GM12878 (cell line): ENCODE measurements at regions of chr2 and their contacts with region 1.

Region 1: GRCh38 chr2:23404426-23404825 is 19.4 kb downstream of the KLHL29 start:
- DNase-seq: peak; percentile 26
- ATAC-seq: peak; percentile 43
- H3K4me3 ChIP-seq: peak overlapping the region; percentile 43
- H3K27ac ChIP-seq: peak overlapping the region; percentile 60
- H3K4me1 ChIP-seq: peaks cover 20% of the 10 kb centered on the region
- H3K27me3 ChIP-seq: no peaks in the 10 kb centered on the region
- CTCF ChIP-seq: peak; percentile 14 to 42 (median 40); a peak in 4 of 6 replicates
- EP300 ChIP-seq: no peak
- POLR2A ChIP-seq: no peak
- RAD21 ChIP-seq: peak; percentile 67

Region 2: GRCh38 chr2:23199115-23199918 is 205.1 kb before region 1 on chr2:
- CTCF ChIA-PET with region 1: interaction called, 6 read pairs
- POLR2A ChIA-PET with region 1: no interaction called
- RAD21 ChIA-PET with region 1: no interaction called
- SMC1A ChIA-PET with region 1: no interaction called
- in situ Hi-C with region 1: no loop called
- intact Hi-C with region 1: loop called (anchors 5 kb)
- DNase-seq: no peak
- ATAC-seq: peak; percentile 72
- H3K4me3 ChIP-seq: no peak overlapping the region
- H3K27ac ChIP-seq: no peak overlapping the region
- H3K4me1 ChIP-seq: no peaks in the 10 kb centered on the region
- H3K27me3 ChIP-seq: no peaks in the 10 kb centered on the region
- CTCF ChIP-seq: peak; percentile 53 to 73 (median 72)
- EP300 ChIP-seq: no peak
- POLR2A ChIP-seq: no peak
- RAD21 ChIP-seq: peak; percentile 27; the same call in 1 of the 2 replicates

Region 3: GRCh38 chr2:23312996-23313606 is 91.3 kb before region 1 on chr2:
- CTCF ChIA-PET with region 1: interaction called, 4 read pairs
- POLR2A ChIA-PET with region 1: no interaction called
- RAD21 ChIA-PET with region 1: interaction called, 4 read pairs
- SMC1A ChIA-PET with region 1: interaction called, 3 read pairs
- in situ Hi-C with region 1: no loop called
- intact Hi-C with region 1: loop called (anchors 1 kb)
- DNase-seq: peak; percentile 5
- ATAC-seq: peak; percentile 99
- H3K4me3 ChIP-seq: no peak overlapping the region
- H3K27ac ChIP-seq: no peak overlapping the region
- H3K4me1 ChIP-seq: no peaks in the 10 kb centered on the region
- H3K27me3 ChIP-seq: peaks cover 0 to 1% of the 10 kb centered on the region in 2 experiments; a peak in 2 of 4 replicates
- CTCF ChIP-seq: peak; percentile 73 to 98 (median 97)
- EP300 ChIP-seq: no peak
- POLR2A ChIP-seq: no peak
- RAD21 ChIP-seq: peak; percentile 73

Region 4: DNA sequence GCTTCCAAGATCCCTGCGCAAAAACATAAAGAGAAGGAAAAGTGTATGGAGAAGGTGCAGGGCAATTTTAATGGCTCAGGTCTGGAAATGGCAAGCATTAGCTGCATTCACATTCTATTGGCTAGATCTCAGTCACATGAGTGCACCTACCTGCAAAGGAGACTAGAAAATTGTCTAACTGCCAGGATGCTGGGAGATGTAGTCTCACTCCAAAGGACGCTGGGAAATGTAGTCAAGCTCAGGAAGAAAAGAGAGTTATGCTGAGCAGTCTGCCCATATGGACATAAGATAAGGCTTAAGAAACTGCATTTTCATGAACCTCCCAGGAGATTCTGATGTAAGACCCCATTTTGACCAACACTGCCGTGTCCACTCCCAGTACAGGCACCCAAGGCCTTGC is 29.0 kb before region 1 on chr2:
- CTCF ChIA-PET with region 1: interaction called, 6 read pairs
- POLR2A ChIA-PET with region 1: interaction called, 6 read pairs
- RAD21 ChIA-PET with region 1: interaction called, 12 read pairs
- SMC1A ChIA-PET with region 1: interaction called, 14 read pairs
- in situ Hi-C with region 1: no loop called
- intact Hi-C with region 1: no loop called
- DNase-seq: no peak
- ATAC-seq: peak; percentile 77
- H3K4me3 ChIP-seq: no peak overlapping the region
- H3K27ac ChIP-seq: no peak overlapping the region
- H3K4me1 ChIP-seq: peaks cover 30% of the 10 kb centered on the region
- H3K27me3 ChIP-seq: no peaks in the 10 kb centered on the region
- CTCF ChIP-seq: no peak
- EP300 ChIP-seq: no peak
- POLR2A ChIP-seq: no peak
- RAD21 ChIP-seq: no peak

Region 5: DNA sequence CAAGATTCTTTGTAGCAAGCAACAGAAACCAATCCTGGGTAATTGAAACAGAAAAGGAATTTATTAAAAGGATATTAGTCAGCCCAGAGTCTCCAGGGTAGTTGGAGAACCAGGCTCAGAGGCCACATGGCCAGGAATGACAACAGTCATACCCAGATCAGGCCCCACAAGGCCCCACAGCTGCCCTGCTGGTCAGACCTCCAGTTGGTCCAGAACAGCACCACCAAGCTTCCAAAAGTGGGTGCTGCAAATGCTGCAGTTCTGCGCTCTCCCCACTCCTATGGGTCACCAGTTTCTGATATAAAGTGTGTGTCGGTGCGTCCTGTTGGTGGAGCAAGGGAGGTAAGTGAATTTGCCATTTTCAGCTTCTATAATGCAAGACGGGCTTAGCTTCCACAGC is 10.4 kb after region 1 on chr2:
- CTCF ChIA-PET with region 1: interaction called, 19 read pairs
- POLR2A ChIA-PET with region 1: no interaction called
- RAD21 ChIA-PET with region 1: interaction called, 5 read pairs
- SMC1A ChIA-PET with region 1: interaction called, 7 read pairs
- in situ Hi-C with region 1: no loop called
- intact Hi-C with region 1: no loop called
- DNase-seq: no peak
- ATAC-seq: peak; percentile 77
- H3K4me3 ChIP-seq: no peak overlapping the region
- H3K27ac ChIP-seq: no peak overlapping the region
- H3K4me1 ChIP-seq: no peaks in the 10 kb centered on the region
- H3K27me3 ChIP-seq: no peaks in the 10 kb centered on the region
- CTCF ChIP-seq: peak in 2 of 3 experiments; percentile 19 to 25; a peak in 3 of 6 replicates
- EP300 ChIP-seq: no peak
- POLR2A ChIP-seq: no peak
- RAD21 ChIP-seq: peak; percentile 14; the same call in 1 of the 2 replicates

Region 6: DNA sequence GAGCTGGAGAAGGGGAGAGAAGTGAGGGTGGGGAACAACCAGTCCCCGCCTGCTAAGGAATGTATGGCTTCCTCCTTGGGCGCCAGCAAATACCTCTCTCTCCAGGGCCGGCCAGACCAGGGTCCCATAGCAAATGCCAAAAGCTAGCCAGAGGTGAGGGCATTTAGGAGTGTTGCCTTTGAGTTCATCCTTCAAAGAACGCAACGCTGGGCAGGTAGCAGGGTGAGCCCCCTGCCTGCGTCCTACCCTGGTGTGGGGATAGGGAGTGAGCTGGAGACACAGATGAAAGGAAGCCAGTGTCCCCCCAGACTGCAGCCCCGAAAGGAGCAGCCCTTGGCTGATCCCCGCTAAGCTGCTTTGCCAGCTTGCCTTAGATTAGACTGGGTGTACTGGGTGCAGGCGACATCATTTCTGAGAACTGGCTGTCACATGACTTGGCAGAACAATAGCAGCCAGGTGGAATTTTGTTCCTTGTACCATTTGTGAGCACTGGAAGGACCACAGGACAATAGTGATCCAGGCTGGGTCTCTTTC is 21.0 kb after region 1 on chr2:
- CTCF ChIA-PET with region 1: no interaction called
- POLR2A ChIA-PET with region 1: no interaction called
- RAD21 ChIA-PET with region 1: no interaction called
- SMC1A ChIA-PET with region 1: no interaction called
- in situ Hi-C with region 1: no loop called
- intact Hi-C with region 1: no loop called
- DNase-seq: no peak
- ATAC-seq: no peak
- H3K4me3 ChIP-seq: no peak overlapping the region
- H3K27ac ChIP-seq: no peak overlapping the region
- H3K4me1 ChIP-seq: no peaks in the 10 kb centered on the region
- H3K27me3 ChIP-seq: no peaks in the 10 kb centered on the region
- CTCF ChIP-seq: no peak
- EP300 ChIP-seq: no peak
- POLR2A ChIP-seq: no peak
- RAD21 ChIP-seq: no peak

Region 7: DNA sequence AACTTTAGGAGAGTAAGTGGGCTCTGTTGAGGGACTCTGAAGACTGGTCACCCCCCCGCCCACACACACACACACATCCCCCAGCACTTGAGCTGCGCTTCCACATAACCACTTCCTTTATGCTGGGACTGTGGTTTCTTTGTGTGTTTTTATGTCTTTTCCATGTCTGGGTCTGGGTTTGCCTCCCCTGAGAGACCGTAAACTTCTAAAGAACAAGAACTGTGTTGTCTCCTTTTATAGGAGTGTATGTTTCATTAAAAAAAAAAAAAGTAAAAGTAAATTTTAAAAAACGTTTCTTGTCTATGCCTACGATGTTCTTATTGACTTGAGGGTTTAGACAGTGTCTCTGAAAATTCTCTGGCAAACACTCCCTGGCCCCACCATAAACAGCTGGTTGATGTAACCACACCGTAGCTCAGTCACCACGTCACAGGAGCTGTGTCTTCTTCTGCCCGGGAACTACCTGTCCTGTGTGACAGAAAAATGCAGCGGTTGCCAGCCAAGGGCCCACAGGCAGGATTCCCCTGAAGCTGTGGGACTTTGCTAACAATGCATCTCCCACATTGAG is 48.5 kb after region 1 on chr2:
- CTCF ChIA-PET with region 1: interaction called, 18 read pairs
- POLR2A ChIA-PET with region 1: interaction called, 8 read pairs
- RAD21 ChIA-PET with region 1: interaction called, 16 read pairs
- SMC1A ChIA-PET with region 1: interaction called, 17 read pairs
- in situ Hi-C with region 1: no loop called
- intact Hi-C with region 1: loop called (anchors 5 kb)
- DNase-seq: peak; percentile 33
- ATAC-seq: peak; percentile 81
- H3K4me3 ChIP-seq: 0 out of 2 replicates have a peak overlapping the region, but pooled peaks have one; percentile 13
- H3K27ac ChIP-seq: peak overlapping the region; percentile 67
- H3K4me1 ChIP-seq: peaks cover 41% of the 10 kb centered on the region
- H3K27me3 ChIP-seq: no peaks in the 10 kb centered on the region
- CTCF ChIP-seq: no peak
- EP300 ChIP-seq: no peak; a peak in 1 of 4 replicates
- POLR2A ChIP-seq: no peak
- RAD21 ChIP-seq: no peak

Region 8: GRCh38 chr2:23460228-23460627 is 55.8 kb after region 1 on chr2:
- CTCF ChIA-PET with region 1: interaction called, 18 read pairs
- POLR2A ChIA-PET with region 1: no interaction called
- RAD21 ChIA-PET with region 1: interaction called, 4 read pairs
- SMC1A ChIA-PET with region 1: interaction called, 17 read pairs
- in situ Hi-C with region 1: no loop called
- intact Hi-C with region 1: loop called (anchors 2 kb)
- DNase-seq: no peak
- ATAC-seq: peak; percentile 76
- H3K4me3 ChIP-seq: no peak overlapping the region
- H3K27ac ChIP-seq: no peak overlapping the region
- H3K4me1 ChIP-seq: no peaks in the 10 kb centered on the region
- H3K27me3 ChIP-seq: no peaks in the 10 kb centered on the region
- CTCF ChIP-seq: peak; percentile 70 to 78 (median 77); a peak in 5 of 6 replicates
- EP300 ChIP-seq: no peak
- POLR2A ChIP-seq: no peak
- RAD21 ChIP-seq: peak; percentile 82